ENCODE measurements at regions of chr4 and their contacts with region 1.

Region 1: GRCh38 chr4:124712372-124713184 is at the start of gene ANKRD50:
- DNase-seq: peak; percentile 15 to 85 (median 59)
- ATAC-seq: peak; percentile 82
- H3K4me3 ChIP-seq: peak within 1 kb of the TSS; percentile 61
- H3K4me3 Mint-ChIP-seq: peak within 1 kb of the TSS; percentile 96
- H3K27ac ChIP-seq: peak within 1 kb of the TSS in 1 of 2 donors; percentile 19
- H3K27ac Mint-ChIP-seq: peak within 1 kb of the TSS; percentile 70
- H3K4me1 ChIP-seq: peaks cover 16% of the 10 kb centered on the region
- H3K4me1 Mint-ChIP-seq: peaks cover 8% of the 10 kb centered on the region
- H3K27me3 ChIP-seq: peaks cover 0 to 8% of the 10 kb centered on the region in 2 experiments
- H3K27me3 Mint-ChIP-seq: no peaks in the 10 kb centered on the region
- CTCF ChIP-seq: no peak
- total RNA-seq, gene ANKRD50: 0.27 to 0.36 TPM

Region 2: DNA sequence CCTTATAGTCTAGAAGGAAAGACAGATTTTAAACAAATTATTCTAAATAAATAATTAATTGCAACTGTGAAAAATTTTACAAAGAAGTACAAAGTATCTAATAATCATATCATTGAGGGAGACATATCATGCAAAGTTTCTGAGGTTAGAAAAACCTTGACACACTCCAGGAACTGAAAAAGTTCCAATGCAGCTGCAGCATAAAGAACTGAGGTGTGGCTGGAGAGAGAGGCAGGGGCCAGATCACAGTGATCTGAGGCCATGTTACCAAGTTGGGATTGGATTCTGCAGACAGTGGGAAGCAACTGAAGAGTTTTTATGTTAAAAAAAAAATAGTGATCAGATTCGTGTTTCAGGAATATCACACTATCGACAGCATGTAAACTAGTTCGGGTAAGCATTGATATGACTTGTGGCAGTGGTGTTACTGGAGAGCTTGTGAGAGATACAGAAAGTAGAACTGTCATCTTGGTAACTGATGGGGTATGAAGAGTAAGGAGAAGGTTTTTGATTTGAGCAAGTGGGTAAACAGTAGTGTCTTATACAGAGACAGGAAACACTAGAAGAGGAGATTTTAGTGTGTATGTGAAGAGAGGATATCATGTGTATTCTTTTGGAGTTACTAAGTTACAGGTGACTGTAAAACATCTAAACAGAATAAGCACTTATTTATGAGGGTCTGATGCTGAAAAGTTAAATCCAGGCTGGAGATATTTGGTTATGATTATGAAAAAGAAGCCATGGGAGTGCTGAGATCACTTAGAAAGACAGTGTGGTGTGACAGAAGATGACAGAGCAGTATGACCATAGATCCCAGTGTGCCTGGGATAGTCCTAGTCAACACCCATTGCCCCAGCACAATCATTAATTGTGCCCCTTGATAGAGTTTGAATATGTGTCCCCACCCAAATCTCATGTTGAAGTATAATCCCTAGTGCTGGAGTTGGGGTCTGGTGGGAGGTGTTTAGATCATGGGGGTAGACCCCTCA is 1331.6 kb before region 1 on chr4:
- CTCF ChIA-PET with region 1: no interaction called
- POLR2A ChIA-PET with region 1: no interaction called
- intact Hi-C with region 1: loop called in 1 of 2 experiments (anchors 10 kb)
- DNase-seq: no peak
- ATAC-seq: no peak
- H3K4me3 ChIP-seq: no peak overlapping the region
- H3K4me3 Mint-ChIP-seq: no peak overlapping the region
- H3K27ac ChIP-seq: no peak overlapping the region
- H3K27ac Mint-ChIP-seq: no peak overlapping the region
- H3K4me1 ChIP-seq: no peaks in the 10 kb centered on the region
- H3K4me1 Mint-ChIP-seq: no peaks in the 10 kb centered on the region
- H3K27me3 ChIP-seq: peaks cover 0 to 3% of the 10 kb centered on the region in 2 experiments
- H3K27me3 Mint-ChIP-seq: peaks cover 11% of the 10 kb centered on the region
- CTCF ChIP-seq: no peak

Region 3: DNA sequence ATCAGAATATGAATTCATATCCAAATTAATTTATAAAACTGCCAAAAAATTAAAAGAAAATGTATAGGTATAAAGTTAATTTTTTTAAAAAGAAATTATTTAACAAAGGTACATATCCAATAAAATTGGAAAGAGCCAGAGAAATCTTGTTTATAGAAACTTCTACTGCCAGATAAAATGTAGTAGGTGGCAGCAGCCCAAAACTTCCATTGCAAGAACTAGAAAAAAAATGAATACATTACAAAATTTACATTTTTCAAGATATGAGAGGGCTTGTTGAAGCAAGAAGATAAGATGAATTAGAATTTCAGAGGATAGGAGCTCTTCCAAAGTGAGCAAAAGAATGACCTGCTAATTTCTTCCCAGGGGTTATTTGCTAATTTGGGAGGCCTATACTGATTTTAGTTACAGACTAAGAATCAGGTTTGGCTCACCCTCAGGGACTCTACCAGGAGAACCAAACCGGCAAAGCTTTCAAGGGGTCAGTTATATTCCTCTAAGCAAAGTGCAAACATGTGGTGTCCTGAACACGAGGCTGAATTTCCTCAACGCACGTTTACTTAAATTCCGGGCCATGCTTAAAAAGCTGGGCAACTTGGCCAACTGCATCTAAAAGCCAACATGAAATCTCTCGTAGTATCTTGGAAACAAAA is 17.5 kb before region 1 on chr4:
- CTCF ChIA-PET with region 1: no interaction called
- POLR2A ChIA-PET with region 1: no interaction called
- intact Hi-C with region 1: no loop called
- DNase-seq: no peak
- ATAC-seq: no peak
- H3K4me3 ChIP-seq: no peak overlapping the region
- H3K4me3 Mint-ChIP-seq: no peak overlapping the region
- H3K27ac ChIP-seq: no peak overlapping the region
- H3K27ac Mint-ChIP-seq: no peak overlapping the region
- H3K4me1 ChIP-seq: no peaks in the 10 kb centered on the region
- H3K4me1 Mint-ChIP-seq: no peaks in the 10 kb centered on the region
- H3K27me3 ChIP-seq: no peaks in the 10 kb centered on the region
- H3K27me3 Mint-ChIP-seq: no peaks in the 10 kb centered on the region
- CTCF ChIP-seq: no peak